CD4-positive, alpha-beta T cell (primary cell): ENCODE measurements at regions of chr18 and their contacts with region 1.

Region 1: GRCh38 chr18:3162181-3162580 is 57.6 kb downstream of the MYOM1 start:
- DNase-seq: no peak
- ATAC-seq: no peak
- H3K4me3 ChIP-seq: no peak overlapping the region
- H3K4me3 Mint-ChIP-seq: no peak overlapping the region
- H3K27ac ChIP-seq: no peak overlapping the region
- H3K27ac Mint-ChIP-seq: no peak overlapping the region
- H3K4me1 ChIP-seq: no peaks in the 10 kb centered on the region
- H3K4me1 Mint-ChIP-seq: no peaks in the 10 kb centered on the region
- H3K27me3 ChIP-seq: no peaks in the 10 kb centered on the region
- H3K27me3 Mint-ChIP-seq: no peaks in the 10 kb centered on the region
- CTCF ChIP-seq: no peak

Region 2: GRCh38 chr18:3097082-3097481 is 65.1 kb before region 1 on chr18:
- CTCF ChIA-PET with region 1: no interaction called
- POLR2A ChIA-PET with region 1: no interaction called
- intact Hi-C with region 1: no loop called
- DNase-seq: peak in 5 of 14 experiments; percentile 3 to 77 (median 70)
- ATAC-seq: peak; percentile 95
- H3K4me3 ChIP-seq: no peak overlapping the region
- H3K4me3 Mint-ChIP-seq: peak overlapping the region; percentile 5
- H3K27ac ChIP-seq: no peak overlapping the region
- H3K27ac Mint-ChIP-seq: peak overlapping the region; percentile 70
- H3K4me1 ChIP-seq: peaks cover 16% of the 10 kb centered on the region
- H3K4me1 Mint-ChIP-seq: peaks cover 40% of the 10 kb centered on the region
- H3K27me3 ChIP-seq: no peaks in the 10 kb centered on the region
- H3K27me3 Mint-ChIP-seq: no peaks in the 10 kb centered on the region
- CTCF ChIP-seq: no peak

Region 3: GRCh38 chr18:3207565-3207964 is 45.4 kb after region 1 on chr18:
- CTCF ChIA-PET with region 1: no interaction called
- POLR2A ChIA-PET with region 1: no interaction called
- intact Hi-C with region 1: no loop called
- DNase-seq: no peak
- ATAC-seq: no peak
- H3K4me3 ChIP-seq: no peak overlapping the region
- H3K4me3 Mint-ChIP-seq: no peak overlapping the region
- H3K27ac ChIP-seq: no peak overlapping the region
- H3K27ac Mint-ChIP-seq: no peak overlapping the region
- H3K4me1 ChIP-seq: no peaks in the 10 kb centered on the region
- H3K4me1 Mint-ChIP-seq: no peaks in the 10 kb centered on the region
- H3K27me3 ChIP-seq: no peaks in the 10 kb centered on the region
- H3K27me3 Mint-ChIP-seq: no peaks in the 10 kb centered on the region
- CTCF ChIP-seq: no peak

Region 4: DNA sequence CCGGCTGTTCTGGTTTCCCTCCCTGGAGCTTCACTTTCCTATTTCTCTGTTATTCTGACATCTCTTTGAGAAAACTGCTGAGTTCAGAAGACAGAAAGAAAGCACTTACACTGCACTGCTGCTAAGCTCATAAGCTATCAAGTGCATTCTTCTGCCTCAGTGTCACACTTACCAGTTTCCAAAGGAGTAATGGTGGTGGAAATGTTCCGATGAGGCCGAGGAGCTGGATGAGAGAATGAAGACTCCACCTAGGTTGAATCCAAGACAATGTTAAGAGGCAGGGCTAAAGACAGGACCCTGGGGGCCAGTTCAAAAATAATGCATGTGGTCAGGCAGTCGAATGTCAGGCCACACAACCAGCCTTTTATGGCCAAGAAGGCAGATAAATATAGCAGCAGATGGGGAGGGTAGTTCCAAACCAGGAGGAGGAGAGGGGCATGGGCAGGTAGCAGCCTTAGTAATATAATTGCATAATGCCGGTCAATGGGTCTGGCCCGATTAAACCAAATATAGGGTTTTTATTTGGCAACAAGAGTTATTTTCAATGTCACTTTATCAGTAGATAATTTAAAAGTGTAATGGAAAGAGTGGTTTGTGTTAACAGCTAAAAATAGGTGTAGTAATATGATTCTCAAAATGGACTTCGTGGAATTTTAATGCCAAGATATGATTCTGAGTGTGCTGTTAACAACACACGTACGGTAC is 57.6 kb after region 1 on chr18 and contains the start of gene MYOM1:
- CTCF ChIA-PET with region 1: no interaction called
- POLR2A ChIA-PET with region 1: no interaction called
- intact Hi-C with region 1: loop called in 1 of 2 experiments (anchors 5 kb)
- DNase-seq: no peak
- ATAC-seq: no peak
- H3K4me3 ChIP-seq: no peak within 1 kb of the TSS
- H3K4me3 Mint-ChIP-seq: no peak within 1 kb of the TSS
- H3K27ac ChIP-seq: no peak within 1 kb of the TSS
- H3K27ac Mint-ChIP-seq: no peak within 1 kb of the TSS
- H3K4me1 ChIP-seq: no peaks in the 10 kb centered on the region
- H3K4me1 Mint-ChIP-seq: peaks cover 5% of the 10 kb centered on the region
- H3K27me3 ChIP-seq: no peaks in the 10 kb centered on the region
- H3K27me3 Mint-ChIP-seq: no peaks in the 10 kb centered on the region
- CTCF ChIP-seq: no peak
- total RNA-seq, gene MYOM1: 0.74 to 1.5 TPM